IMR-90 (cell line): ENCODE measurements at regions of chr7 and their contacts with region 1.

Region 1: GRCh38 chr7:127347567-127348246 is 44.8 kb downstream of the ZNF800 start:
- DNase-seq: peak; percentile 61
- ATAC-seq: peak; percentile 100
- H3K4me3 ChIP-seq: peak overlapping the region; percentile 33
- H3K27ac ChIP-seq: no peak overlapping the region
- H3K4me1 ChIP-seq: no peaks in the 10 kb centered on the region
- H3K27me3 ChIP-seq: no peaks in the 10 kb centered on the region
- CTCF ChIP-seq: peak; percentile 74
- POLR2A ChIP-seq: no peak
- RAD21 ChIP-seq: peak; percentile 56

Region 2: DNA sequence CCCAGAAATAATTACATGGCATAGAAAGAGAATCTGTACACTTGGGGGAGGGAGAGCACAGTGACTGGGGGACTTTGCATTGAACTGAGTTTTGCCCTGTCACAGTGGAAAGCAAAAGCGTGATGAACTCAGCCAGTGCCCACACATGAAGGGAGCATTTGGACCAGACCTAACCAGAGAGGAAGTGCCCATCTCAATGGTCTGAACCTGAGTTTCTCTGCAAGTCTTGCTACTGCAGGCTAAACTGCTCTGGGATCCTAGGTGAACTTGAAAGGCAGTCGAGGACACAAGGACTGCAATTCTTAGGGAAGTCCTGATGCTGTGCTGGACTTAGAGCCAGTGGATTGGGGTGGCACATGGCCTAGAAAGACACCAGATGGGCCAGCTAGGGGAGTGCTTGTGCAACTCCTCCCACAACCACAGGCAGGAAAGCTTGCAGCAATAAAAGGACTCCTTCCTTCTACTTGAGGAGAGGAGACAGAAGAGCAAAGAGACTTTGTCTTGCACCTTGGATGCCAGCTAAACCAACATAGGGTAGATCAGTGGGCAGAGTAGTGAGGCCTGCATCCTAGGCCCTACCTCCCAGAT is 354.0 kb before region 1 on chr7:
- CTCF ChIA-PET with region 1: no interaction called
- POLR2A ChIA-PET with region 1: no interaction called
- dilution Hi-C with region 1: no loop called
- in situ Hi-C with region 1: no loop called
- intact Hi-C with region 1: no loop called
- DNase-seq: no peak
- ATAC-seq: no peak
- H3K4me3 ChIP-seq: no peak overlapping the region
- H3K27ac ChIP-seq: no peak overlapping the region
- H3K4me1 ChIP-seq: no peaks in the 10 kb centered on the region
- H3K27me3 ChIP-seq: no peaks in the 10 kb centered on the region
- CTCF ChIP-seq: no peak
- POLR2A ChIP-seq: no peak
- RAD21 ChIP-seq: no peak

Region 3: GRCh38 chr7:127021857-127022256 is 325.9 kb before region 1 on chr7:
- CTCF ChIA-PET with region 1: no interaction called
- POLR2A ChIA-PET with region 1: no interaction called
- dilution Hi-C with region 1: no loop called
- in situ Hi-C with region 1: no loop called
- intact Hi-C with region 1: no loop called
- DNase-seq: no peak
- ATAC-seq: no peak
- H3K4me3 ChIP-seq: no peak overlapping the region
- H3K27ac ChIP-seq: no peak overlapping the region
- H3K4me1 ChIP-seq: no peaks in the 10 kb centered on the region
- H3K27me3 ChIP-seq: no peaks in the 10 kb centered on the region
- CTCF ChIP-seq: no peak
- POLR2A ChIP-seq: no peak
- RAD21 ChIP-seq: no peak

Region 4: GRCh38 chr7:127290801-127291361 is 56.8 kb before region 1 on chr7:
- CTCF ChIA-PET with region 1: no interaction called
- POLR2A ChIA-PET with region 1: no interaction called
- dilution Hi-C with region 1: no loop called
- in situ Hi-C with region 1: no loop called
- intact Hi-C with region 1: no loop called
- DNase-seq: peak; percentile 0
- ATAC-seq: no peak
- H3K4me3 ChIP-seq: no peak overlapping the region
- H3K27ac ChIP-seq: no peak overlapping the region
- H3K4me1 ChIP-seq: no peaks in the 10 kb centered on the region
- H3K27me3 ChIP-seq: no peaks in the 10 kb centered on the region
- CTCF ChIP-seq: no peak
- POLR2A ChIP-seq: no peak
- RAD21 ChIP-seq: no peak

Region 5: GRCh38 chr7:127392566-127393367 is 45.1 kb after region 1 on chr7 and contains the start of gene ZNF800:
- CTCF ChIA-PET with region 1: interaction called, 5 read pairs
- POLR2A ChIA-PET with region 1: no interaction called
- dilution Hi-C with region 1: no loop called
- in situ Hi-C with region 1: no loop called
- intact Hi-C with region 1: loop called (anchors 5 kb)
- DNase-seq: peak; percentile 82
- ATAC-seq: peak; percentile 92
- H3K4me3 ChIP-seq: peak within 1 kb of the TSS; percentile 89
- H3K27ac ChIP-seq: peak within 1 kb of the TSS; percentile 76
- H3K4me1 ChIP-seq: 0 out of 2 replicates have a peak, but pooled peaks cover 2% of the 10 kb centered on the region
- H3K27me3 ChIP-seq: no peaks in the 10 kb centered on the region
- CTCF ChIP-seq: no peak
- POLR2A ChIP-seq: peak; percentile 93
- RAD21 ChIP-seq: no peak
- total RNA-seq, gene ZNF800: 13.1 and 20.0 TPM in 2 replicates

Region 6: DNA sequence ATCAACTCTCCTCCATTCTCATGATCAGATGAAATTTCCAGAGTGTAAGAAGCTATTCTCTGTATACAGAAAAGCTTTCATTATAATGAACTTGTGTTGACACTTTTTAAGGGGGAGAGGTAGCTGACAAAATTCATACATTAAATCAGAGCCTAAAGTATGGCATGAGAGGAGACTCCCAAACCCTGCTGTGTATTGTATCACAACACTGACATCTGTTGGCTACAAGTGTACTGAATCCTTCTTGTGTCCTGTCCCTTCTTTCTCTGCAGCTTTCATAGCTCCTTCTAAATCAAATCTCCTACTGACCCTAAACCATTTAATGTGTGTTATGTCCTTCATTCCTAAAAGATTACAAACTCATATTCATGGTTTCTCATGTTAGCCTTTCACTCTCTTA is 166.8 kb after region 1 on chr7:
- CTCF ChIA-PET with region 1: no interaction called
- POLR2A ChIA-PET with region 1: no interaction called
- dilution Hi-C with region 1: no loop called
- in situ Hi-C with region 1: no loop called
- intact Hi-C with region 1: loop called (anchors 2 kb)
- DNase-seq: peak; percentile 39
- ATAC-seq: peak; percentile 79; the same call in 1 of the 2 replicates
- H3K4me3 ChIP-seq: no peak overlapping the region
- H3K27ac ChIP-seq: no peak overlapping the region
- H3K4me1 ChIP-seq: no peaks in the 10 kb centered on the region
- H3K27me3 ChIP-seq: no peaks in the 10 kb centered on the region
- CTCF ChIP-seq: peak; percentile 55
- POLR2A ChIP-seq: no peak
- RAD21 ChIP-seq: peak; percentile 66